Head of caudate nucleus (tissue), 42 donors: ENCODE measurements at regions of chr11 and their contacts with region 1.

Region 1: DNA sequence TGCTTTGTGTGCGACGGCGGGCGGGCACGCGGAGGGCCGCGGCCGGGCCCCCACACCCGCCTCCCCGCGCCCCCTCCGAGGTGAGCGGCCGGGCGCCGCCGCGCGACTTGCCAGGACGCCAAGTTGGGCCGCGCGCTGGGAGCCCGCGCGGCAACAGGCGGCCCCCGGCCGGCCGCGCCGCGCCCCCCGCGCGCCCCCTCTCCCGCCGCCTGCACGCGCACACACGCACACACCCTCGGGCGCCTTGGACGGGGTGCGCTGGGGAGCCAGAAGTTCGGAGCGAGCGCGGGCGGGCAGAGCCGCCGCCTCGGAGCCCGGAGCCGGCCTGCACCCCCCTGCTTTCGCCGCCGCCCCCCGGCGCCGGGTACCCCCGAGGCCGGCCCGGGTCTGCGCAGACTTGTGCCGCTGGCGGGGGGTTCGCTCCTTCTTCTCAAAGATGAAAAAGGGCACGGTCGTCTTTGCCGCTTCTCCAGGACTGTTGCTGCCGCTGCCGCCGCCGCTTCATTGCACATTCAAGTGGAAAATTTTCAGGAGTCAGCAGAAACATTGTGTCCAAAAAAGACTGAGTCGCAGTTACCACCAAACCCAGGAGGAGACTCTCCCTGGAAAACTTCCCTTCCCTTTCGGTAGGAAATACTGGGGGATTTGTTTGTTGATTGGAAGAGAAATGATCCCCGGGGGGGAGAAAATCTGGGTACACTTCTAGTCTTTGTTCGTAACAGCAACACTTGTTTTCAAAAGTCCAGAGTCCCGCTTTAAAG is 895 bp downstream of the TEAD1 start:
- DNase-seq: peak in 40 of 42 donors; percentile 7 to 73 (median 42)

Region 2: GRCh38 chr11:12741671-12742216 is 66.6 kb after region 1 on chr11:
- intact Hi-C with region 1: no loop called
- DNase-seq: peak in 18 of 42 donors; percentile 5 to 56 (median 30)

Region 3: GRCh38 chr11:12888525-12889158 is 213.5 kb after region 1 on chr11:
- intact Hi-C with region 1: loop called (anchors 5 kb)
- DNase-seq: peak; percentile 57 to 94 (median 84)